Activated CD8-positive, alpha-beta T cell treated with anti-CD3 and anti-CD28 coated beads, Interleukin-2, amount 10 ng/mL, durations not matched to agents 7 days and 5 days (primary cell): ENCODE measurements at regions of chr7 and their contacts with region 1.

Region 1: GRCh38 chr7:26305463-26306273 is 14.0 kb downstream of the SNX10 start:
- DNase-seq: peak; percentile 48
- ATAC-seq: peak; percentile 69
- H3K4me3 Mint-ChIP-seq: no peak overlapping the region
- H3K27ac Mint-ChIP-seq: peak overlapping the region; percentile 73
- H3K4me1 Mint-ChIP-seq: peaks cover 28% of the 10 kb centered on the region
- H3K27me3 Mint-ChIP-seq: no peaks in the 10 kb centered on the region

Region 2: GRCh38 chr7:26291699-26292538 is 13.7 kb before region 1 on chr7 and contains the start of gene SNX10:
- CTCF ChIA-PET with region 1: interaction called, 11 read pairs
- POLR2A ChIA-PET with region 1: interaction called, 8 read pairs
- DNase-seq: peak; percentile 82
- ATAC-seq: peak; percentile 80
- H3K4me3 Mint-ChIP-seq: peak within 1 kb of the TSS; percentile 94
- H3K27ac Mint-ChIP-seq: peak within 1 kb of the TSS; percentile 92
- H3K4me1 Mint-ChIP-seq: peaks cover 38% of the 10 kb centered on the region
- H3K27me3 Mint-ChIP-seq: peaks cover 6% of the 10 kb centered on the region
- total RNA-seq, gene SNX10: 39.2 to 42.7 TPM

Region 3: DNA sequence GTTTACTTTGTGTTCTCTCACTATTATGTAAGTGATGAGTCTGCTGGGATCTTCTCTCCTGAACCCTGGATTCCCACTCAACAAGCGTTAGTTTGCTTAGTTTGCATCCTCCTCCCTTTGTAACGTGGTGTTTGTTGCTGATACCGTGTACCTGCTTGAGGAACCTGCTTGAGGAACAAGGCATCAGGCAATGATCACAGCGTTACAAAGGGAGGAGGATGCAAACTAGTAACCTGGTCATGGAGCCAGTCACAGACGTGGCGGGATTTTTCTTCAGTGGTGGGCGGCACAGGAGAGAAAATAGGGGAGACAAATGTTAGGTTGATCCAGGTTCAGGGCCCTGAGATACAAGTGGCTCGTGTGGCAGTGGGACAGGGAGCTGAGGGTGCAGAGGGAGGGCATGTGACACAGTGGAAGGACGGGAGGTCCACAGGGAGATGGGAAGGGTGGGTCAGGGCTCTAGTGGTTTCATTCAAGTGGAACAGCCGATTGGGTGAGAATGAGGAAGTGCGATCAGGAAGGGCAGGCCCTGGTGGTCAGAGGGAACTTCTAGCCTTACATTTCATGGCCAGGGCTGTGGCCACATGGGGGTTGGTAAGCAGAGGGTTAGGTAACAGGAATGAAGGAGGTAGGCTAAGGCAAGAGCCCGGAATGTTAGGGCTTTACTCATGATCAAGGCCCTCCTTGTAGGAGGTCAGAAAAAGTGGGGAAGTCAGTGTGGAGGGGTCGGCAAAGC is 24.0 kb after region 1 on chr7:
- CTCF ChIA-PET with region 1: no interaction called
- POLR2A ChIA-PET with region 1: no interaction called
- DNase-seq: no peak
- ATAC-seq: no peak
- H3K4me3 Mint-ChIP-seq: no peak overlapping the region
- H3K27ac Mint-ChIP-seq: no peak overlapping the region
- H3K4me1 Mint-ChIP-seq: peaks cover 24% of the 10 kb centered on the region
- H3K27me3 Mint-ChIP-seq: no peaks in the 10 kb centered on the region

Region 4: DNA sequence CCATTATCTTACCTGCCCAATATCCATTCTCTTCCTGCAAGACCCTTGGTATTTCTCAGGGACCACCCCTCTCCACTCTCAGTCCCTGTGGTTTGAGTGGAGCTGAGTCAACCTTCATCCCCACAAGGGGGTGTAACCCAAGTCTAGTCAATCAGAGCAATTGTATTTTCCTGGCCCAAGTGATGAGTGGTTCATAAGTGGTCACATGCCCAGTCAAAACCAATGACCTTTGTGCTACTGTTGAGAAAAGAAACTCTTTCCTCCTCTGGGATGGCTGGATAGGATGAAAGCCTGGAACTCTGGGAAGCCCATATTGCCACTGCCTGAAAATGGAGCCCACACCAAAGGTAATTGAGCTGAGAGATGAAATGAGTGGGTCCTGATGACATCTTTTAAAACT is 79.6 kb after region 1 on chr7:
- CTCF ChIA-PET with region 1: no interaction called
- POLR2A ChIA-PET with region 1: no interaction called
- DNase-seq: no peak
- ATAC-seq: no peak
- H3K4me3 Mint-ChIP-seq: no peak overlapping the region
- H3K27ac Mint-ChIP-seq: no peak overlapping the region
- H3K4me1 Mint-ChIP-seq: no peaks in the 10 kb centered on the region
- H3K27me3 Mint-ChIP-seq: peaks cover 31% of the 10 kb centered on the region